ENCODE measurements at regions of chr1 and their contacts with region 1.

Region 1: DNA sequence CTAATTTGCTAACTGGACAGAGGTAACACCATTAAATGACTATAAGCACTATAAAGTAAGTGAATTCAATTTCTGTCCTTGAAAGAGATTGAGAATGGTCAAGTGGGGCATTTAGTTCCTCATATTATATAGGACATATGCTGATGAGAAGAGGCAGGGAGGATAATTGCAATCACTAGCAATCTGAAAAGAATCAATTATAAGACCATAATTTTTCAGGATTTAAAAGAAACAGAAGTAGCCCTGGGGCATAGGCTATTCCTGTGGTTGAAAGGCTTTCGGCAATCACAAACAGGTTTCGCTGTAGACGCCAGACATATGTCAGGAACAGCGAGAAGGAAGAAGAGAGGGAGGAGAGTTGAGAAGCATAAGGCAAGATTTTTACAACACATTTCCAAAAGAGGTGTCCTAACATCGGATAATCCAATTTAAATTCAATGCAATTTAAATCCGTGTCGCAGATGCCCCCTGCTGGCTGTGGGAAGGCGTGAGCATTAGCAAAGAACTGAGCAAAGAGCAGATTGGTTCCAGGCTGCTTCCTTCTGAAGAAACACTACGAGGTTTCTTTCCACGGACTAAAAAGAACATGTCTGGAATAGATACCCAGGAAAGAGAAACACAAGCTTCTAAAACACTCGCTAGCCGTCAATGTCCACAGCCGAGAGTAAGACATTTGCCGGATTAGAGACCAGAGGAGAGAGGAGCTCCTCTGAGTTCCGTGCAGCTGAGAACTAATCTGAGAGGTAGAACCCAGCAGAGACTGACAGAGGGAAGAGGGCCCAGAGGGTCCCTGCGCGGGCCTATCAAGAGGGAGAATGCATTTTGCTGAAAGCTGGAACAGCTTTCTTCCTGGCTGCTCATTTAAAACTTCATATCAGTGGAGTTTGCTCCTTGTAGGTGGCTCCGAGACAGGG is 27.9 kb downstream of the RGS5 start:
- DNase-seq: no peak
- H3K4me3 ChIP-seq: no peak overlapping the region
- H3K27me3 ChIP-seq: no peaks in the 10 kb centered on the region
- CTCF ChIP-seq: peak; percentile 88

Region 2: DNA sequence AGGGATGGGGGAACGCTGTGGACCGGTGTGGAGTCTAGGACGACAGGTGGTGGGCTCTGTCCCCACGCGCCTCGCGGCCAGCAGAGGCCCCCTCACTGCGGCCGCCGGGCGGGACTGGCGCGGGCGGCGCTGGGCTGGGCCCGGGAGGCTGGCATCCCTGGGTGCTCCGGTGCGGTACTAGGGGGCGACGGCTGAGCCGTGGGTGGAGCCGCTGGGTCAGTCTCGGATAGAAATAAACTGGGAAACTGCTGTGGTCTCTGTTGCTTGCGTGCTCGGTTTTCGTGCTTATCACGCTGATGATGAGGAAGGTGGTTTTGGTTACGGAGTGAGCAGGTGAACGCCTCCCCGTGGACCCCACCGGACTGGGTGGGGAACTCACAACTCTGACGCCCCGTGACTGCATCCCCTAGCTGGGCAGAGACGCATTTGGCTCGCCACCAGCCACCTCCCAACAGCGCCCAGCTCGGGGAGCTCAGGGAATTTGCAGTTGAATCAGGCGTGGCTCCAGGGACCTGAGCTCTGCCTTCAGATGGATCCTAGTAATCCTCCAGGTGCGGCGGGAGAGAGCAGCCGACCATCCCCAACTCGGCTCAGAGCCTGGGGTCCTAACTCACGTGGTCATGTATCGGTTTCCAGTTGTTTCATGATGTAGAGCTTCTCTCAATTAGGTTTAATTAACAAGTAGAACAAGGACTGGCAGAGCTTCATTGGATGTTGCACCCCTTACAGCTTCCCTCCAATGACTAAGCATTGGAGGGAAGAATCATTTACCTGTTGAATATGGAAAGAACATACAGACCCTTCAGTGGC is 352.2 kb before region 1 on chr1:
- CTCF ChIA-PET with region 1: no interaction called
- POLR2A ChIA-PET with region 1: no interaction called
- DNase-seq: no peak
- H3K4me3 ChIP-seq: peak overlapping the region; percentile 33
- H3K27me3 ChIP-seq: no peaks in the 10 kb centered on the region
- CTCF ChIP-seq: peak; percentile 4; the same call in 1 of the 2 replicates

Region 3: DNA sequence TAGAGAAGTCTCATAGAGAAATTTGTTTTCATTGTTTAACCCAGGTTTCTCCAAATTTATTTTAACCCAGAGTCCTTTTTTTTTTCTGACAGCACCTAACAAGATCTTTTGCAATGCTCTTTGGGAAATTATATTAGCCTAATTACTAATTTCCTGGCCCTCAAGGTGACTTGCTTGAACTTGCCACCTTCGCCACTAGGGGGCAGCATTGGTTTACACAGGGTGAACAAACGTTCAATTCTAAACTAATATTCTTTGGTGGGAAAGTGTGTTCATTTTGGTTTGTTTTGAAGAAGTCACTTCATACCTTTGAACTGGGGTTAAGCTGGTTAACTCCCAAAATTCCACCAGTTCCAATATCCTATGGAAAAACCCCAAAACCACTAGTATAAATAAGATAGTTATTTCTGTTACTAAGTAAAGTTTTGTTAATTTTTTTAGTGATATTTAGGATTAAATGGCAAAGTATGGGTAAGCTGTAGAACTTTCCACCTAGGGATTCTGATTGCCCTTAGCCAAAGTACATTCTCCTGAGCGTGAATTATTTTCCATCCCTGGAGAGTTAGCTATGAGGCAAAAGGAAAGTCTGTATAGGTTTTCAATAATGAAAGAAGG is 326.8 kb before region 1 on chr1:
- CTCF ChIA-PET with region 1: interaction called, 15 read pairs
- POLR2A ChIA-PET with region 1: no interaction called
- DNase-seq: no peak
- H3K4me3 ChIP-seq: no peak overlapping the region
- H3K27me3 ChIP-seq: no peaks in the 10 kb centered on the region
- CTCF ChIP-seq: peak; percentile 87

Region 4: GRCh38 chr1:162878000-162878596 is 296.7 kb before region 1 on chr1:
- CTCF ChIA-PET with region 1: interaction called, 30 read pairs
- POLR2A ChIA-PET with region 1: interaction called, 4 read pairs
- DNase-seq: no peak
- H3K4me3 ChIP-seq: no peak overlapping the region
- H3K27me3 ChIP-seq: no peaks in the 10 kb centered on the region
- CTCF ChIP-seq: peak; percentile 81

Region 5: DNA sequence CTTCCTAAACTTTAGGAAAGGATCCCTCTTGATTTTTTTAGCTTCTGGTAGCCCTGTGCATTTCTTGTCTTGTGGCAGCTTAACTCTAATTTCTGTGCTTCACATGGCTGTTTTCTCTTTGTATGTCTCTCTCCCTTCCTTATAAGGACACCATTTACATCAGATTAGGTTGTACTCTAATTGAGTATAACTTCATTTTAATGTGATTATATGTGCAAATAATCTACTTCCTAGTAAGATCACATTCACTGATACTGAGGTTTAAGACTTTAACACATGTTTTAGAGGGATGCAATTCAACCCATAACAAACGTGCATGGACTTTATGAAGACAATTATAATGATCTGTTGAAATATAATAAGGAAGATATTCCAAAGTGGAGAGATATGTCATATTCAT is 58.9 kb before region 1 on chr1:
- CTCF ChIA-PET with region 1: no interaction called
- POLR2A ChIA-PET with region 1: no interaction called
- DNase-seq: no peak
- H3K4me3 ChIP-seq: no peak overlapping the region
- H3K27me3 ChIP-seq: no peaks in the 10 kb centered on the region
- CTCF ChIP-seq: no peak

Region 6: GRCh38 chr1:163147019-163147418 is 27.8 kb before region 1 on chr1:
- CTCF ChIA-PET with region 1: no interaction called
- POLR2A ChIA-PET with region 1: no interaction called
- DNase-seq: no peak
- H3K4me3 ChIP-seq: no peak overlapping the region
- H3K27me3 ChIP-seq: no peaks in the 10 kb centered on the region
- CTCF ChIP-seq: no peak

Region 7: DNA sequence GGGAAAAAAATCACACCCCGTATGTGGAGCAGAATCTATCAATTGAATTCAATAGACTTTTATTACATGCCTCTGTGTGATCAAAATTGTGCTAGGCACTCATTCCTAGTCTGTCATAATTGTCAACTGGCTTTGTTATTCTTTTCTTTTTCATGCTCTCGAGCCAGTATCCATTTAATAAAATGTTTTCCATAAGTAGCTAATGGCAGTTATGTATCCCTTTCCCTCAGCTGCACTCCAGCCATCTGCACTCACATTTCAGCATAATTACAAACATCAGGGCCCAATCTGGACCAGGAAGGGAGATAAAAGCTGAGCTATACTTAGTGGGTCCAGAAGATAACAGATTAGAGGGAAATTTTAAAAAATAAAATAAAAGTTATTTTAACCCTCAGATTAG is 12.1 kb after region 1 on chr1:
- CTCF ChIA-PET with region 1: interaction called, 13 read pairs
- POLR2A ChIA-PET with region 1: no interaction called
- DNase-seq: no peak
- H3K4me3 ChIP-seq: no peak overlapping the region
- H3K27me3 ChIP-seq: no peaks in the 10 kb centered on the region
- CTCF ChIP-seq: no peak

Region 8: DNA sequence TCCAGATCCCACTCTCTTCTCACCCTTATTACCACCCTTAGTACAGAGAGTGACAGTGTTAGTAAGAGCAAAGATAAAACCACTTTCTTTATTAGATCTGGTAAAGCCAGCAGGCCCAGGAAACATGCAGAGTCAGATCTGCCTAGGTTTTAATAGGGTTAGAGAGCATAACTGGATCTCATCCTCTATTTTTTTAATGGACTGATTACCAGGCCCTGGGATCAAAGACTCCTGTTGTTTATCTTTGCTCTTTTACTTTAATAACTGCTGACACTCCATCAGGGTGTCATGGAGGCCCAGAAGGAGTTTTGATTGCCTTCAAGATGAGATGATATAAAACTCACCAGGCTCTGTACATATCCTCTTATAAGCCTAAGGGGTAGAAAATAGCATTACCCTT is 73.3 kb after region 1 on chr1:
- CTCF ChIA-PET with region 1: no interaction called
- POLR2A ChIA-PET with region 1: no interaction called
- DNase-seq: no peak
- H3K4me3 ChIP-seq: no peak overlapping the region
- H3K27me3 ChIP-seq: no peaks in the 10 kb centered on the region
- CTCF ChIP-seq: no peak

Measured in BJ (cell line).